Endothelial cell of umbilical vein (primary cell): ENCODE measurements at regions of chr5 and their contacts with region 1.

Region 1: GRCh38 chr5:132369474-132370180 is at the start of gene SLC22A5:
- DNase-seq: peak; percentile 70
- H3K4me3 ChIP-seq: peak within 1 kb of the TSS; percentile 59 to 61 (median 61)
- H3K27ac ChIP-seq: peak within 1 kb of the TSS; percentile 2
- H3K4me1 ChIP-seq: peaks cover 5% of the 10 kb centered on the region
- H3K27me3 ChIP-seq: no peaks in the 10 kb centered on the region
- CTCF ChIP-seq: no peak
- POLR2A ChIP-seq: peak; percentile 28
- total RNA-seq, gene SLC22A5: 3.6 and 3.8 TPM in 2 replicates

Region 2: DNA sequence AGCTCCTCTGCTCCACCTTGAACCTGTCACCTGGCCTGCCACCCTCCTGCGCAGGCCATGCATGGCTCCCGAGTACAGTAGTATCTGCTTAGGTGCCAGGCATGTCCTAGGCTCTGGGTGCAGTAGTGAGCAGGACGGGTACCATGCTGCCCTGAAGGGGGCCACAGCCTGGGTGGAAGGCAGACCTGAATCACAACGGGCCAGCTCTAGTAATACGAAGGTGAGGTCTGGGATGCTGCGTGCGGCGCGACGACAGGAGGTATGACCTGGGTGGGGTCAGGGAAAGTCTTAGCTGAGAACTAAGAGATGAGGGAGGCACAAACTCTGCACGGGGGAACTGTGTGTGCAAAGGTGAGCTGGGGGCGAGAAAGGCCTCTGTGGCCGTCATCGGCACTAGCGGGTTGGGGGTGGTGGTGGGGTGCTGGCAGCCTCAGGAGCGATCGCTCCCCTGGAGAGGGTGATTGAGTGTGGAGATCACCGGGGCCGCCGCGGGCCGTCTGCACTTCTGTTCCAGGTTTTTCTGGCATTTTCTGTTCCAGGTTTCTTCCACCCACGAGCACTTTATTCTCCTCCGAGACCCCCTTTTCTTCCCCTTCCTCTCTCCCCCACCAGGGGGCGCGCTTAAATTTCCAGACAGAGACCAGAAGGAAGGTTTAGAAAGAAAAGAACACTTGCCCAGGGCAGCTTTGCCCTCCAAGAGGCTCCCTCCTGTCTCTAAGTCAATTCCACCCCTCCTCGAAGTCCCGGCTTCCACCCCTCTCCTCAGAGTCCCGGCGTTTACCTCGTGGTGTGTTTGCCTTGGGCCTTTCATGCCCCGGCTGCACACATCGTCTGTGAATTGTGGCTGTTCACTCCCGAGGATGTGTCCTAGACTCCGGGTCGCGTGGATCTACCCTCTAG is 97.1 kb before region 1 on chr5:
- CTCF ChIA-PET with region 1: interaction called, 15 read pairs
- POLR2A ChIA-PET with region 1: no interaction called
- dilution Hi-C with region 1: no loop called
- intact Hi-C with region 1: loop called (anchors 2 kb)
- DNase-seq: peak; percentile 70
- H3K4me3 ChIP-seq: no peak overlapping the region
- H3K27ac ChIP-seq: no peak overlapping the region
- H3K4me1 ChIP-seq: no peaks in the 10 kb centered on the region
- H3K27me3 ChIP-seq: no peaks in the 10 kb centered on the region
- CTCF ChIP-seq: peak; percentile 79 to 81
- POLR2A ChIP-seq: peak; percentile 36

Region 3: DNA sequence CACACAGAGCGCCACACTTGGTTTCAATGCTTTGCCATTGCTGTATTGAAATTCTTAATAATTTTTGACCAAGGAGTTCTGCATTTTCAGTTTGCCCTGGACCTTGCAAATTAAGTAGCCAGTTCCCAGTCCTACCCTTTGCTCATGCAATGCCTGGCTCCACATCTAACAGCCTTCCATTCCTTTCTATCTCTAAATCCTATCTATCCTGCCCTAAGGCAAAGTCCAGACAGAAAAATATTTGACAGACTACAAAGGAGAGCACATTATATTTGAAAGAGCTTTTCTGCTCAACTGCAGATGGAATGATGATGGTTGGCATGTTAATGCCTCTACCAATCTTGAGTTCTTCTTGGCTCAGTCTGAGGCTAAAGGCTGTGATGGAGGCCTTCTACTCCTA is 60.0 kb before region 1 on chr5:
- CTCF ChIA-PET with region 1: no interaction called
- POLR2A ChIA-PET with region 1: no interaction called
- dilution Hi-C with region 1: no loop called
- intact Hi-C with region 1: no loop called
- DNase-seq: no peak
- H3K4me3 ChIP-seq: no peak overlapping the region
- H3K27ac ChIP-seq: no peak overlapping the region
- H3K4me1 ChIP-seq: peaks cover 4% of the 10 kb centered on the region
- H3K27me3 ChIP-seq: no peaks in the 10 kb centered on the region
- CTCF ChIP-seq: no peak
- POLR2A ChIP-seq: no peak

Region 4: GRCh38 chr5:132679717-132680380 is 310.2 kb after region 1 on chr5:
- CTCF ChIA-PET with region 1: no interaction called
- POLR2A ChIA-PET with region 1: no interaction called
- dilution Hi-C with region 1: no loop called
- intact Hi-C with region 1: no loop called
- DNase-seq: no peak
- H3K4me3 ChIP-seq: no peak overlapping the region
- H3K27ac ChIP-seq: no peak overlapping the region
- H3K4me1 ChIP-seq: peaks cover 7% of the 10 kb centered on the region
- H3K27me3 ChIP-seq: no peaks in the 10 kb centered on the region
- CTCF ChIP-seq: no peak
- POLR2A ChIP-seq: no peak

Region 5: DNA sequence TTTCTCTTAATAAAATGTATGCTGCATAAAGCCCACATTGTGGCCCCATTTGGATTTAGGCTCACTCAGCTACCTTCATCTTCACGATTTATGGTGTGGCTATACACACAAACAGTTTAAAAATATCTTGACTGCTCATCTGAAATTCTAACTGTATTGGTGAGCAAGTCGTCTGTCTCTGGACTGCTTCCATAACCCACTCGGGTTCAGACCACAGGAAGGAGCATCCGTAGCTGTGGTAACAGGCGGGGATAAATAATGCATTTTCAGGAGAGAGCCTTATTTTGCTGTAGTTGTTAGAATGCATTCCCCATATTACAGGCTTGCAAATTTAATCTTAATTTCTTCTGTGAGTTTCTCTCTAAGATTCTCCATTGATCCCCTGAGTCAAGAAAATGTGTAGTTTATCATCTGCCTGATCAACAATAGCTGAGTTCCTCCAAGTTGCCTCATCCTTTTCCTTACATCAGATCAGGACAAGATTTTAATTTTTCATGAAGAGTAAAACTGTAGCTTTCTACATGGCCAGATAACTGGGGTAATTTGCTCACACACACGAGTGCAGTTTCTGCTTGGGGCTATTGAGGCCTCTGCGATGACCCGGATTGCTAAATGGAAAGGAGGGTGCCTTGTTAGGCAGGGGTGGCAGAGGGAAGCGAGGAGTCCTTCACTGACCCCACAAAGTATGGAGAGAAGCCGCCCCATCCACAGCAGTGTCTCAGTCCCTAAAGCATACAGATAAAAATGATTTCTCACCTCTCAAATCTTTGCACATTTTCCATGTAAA is 1108.8 kb after region 1 on chr5:
- CTCF ChIA-PET with region 1: no interaction called
- POLR2A ChIA-PET with region 1: no interaction called
- dilution Hi-C with region 1: no loop called
- intact Hi-C with region 1: no loop called
- DNase-seq: no peak
- H3K4me3 ChIP-seq: no peak overlapping the region
- H3K27ac ChIP-seq: no peak overlapping the region
- H3K4me1 ChIP-seq: peaks cover 14% of the 10 kb centered on the region
- H3K27me3 ChIP-seq: peaks cover 7 to 11% of the 10 kb centered on the region in 2 experiments
- CTCF ChIP-seq: no peak
- POLR2A ChIP-seq: no peak